Caco-2 (cell line): ENCODE measurements at regions of chr11 and their contacts with region 1.

Region 1: GRCh38 chr11:69048718-69049489 is at the start of gene TPCN2:
- DNase-seq: peak; percentile 97 to 98
- H3K4me3 ChIP-seq: peak within 1 kb of the TSS; percentile 96
- H3K4me3 Mint-ChIP-seq: peak within 1 kb of the TSS; percentile 79
- H3K27ac Mint-ChIP-seq: peak within 1 kb of the TSS; percentile 95
- H3K4me1 ChIP-seq: peaks cover 67% of the 10 kb centered on the region
- H3K4me1 Mint-ChIP-seq: peaks cover 42% of the 10 kb centered on the region
- H3K27me3 ChIP-seq: no peaks in the 10 kb centered on the region
- H3K27me3 Mint-ChIP-seq: no peaks in the 10 kb centered on the region
- CTCF ChIP-seq: no peak
- total RNA-seq, gene TPCN2: 59.5 and 63.6 TPM in 2 replicates

Region 2: GRCh38 chr11:69008774-69009440 is 40.0 kb before region 1 on chr11:
- CTCF ChIA-PET with region 1: interaction called, 8 read pairs
- POLR2A ChIA-PET with region 1: interaction called, 12 read pairs
- intact Hi-C with region 1: loop called (anchors 1 kb)
- DNase-seq: peak; percentile 85 to 93
- H3K4me3 ChIP-seq: no peak overlapping the region
- H3K4me3 Mint-ChIP-seq: no peak overlapping the region
- H3K27ac Mint-ChIP-seq: peak overlapping the region; percentile 82
- H3K4me1 ChIP-seq: peaks cover 44% of the 10 kb centered on the region
- H3K4me1 Mint-ChIP-seq: peaks cover 40% of the 10 kb centered on the region
- H3K27me3 ChIP-seq: no peaks in the 10 kb centered on the region
- H3K27me3 Mint-ChIP-seq: no peaks in the 10 kb centered on the region
- CTCF ChIP-seq: no peak